SK-N-SH (cell line): ENCODE measurements at regions of chr14 and their contacts with region 1.

Region 1: DNA sequence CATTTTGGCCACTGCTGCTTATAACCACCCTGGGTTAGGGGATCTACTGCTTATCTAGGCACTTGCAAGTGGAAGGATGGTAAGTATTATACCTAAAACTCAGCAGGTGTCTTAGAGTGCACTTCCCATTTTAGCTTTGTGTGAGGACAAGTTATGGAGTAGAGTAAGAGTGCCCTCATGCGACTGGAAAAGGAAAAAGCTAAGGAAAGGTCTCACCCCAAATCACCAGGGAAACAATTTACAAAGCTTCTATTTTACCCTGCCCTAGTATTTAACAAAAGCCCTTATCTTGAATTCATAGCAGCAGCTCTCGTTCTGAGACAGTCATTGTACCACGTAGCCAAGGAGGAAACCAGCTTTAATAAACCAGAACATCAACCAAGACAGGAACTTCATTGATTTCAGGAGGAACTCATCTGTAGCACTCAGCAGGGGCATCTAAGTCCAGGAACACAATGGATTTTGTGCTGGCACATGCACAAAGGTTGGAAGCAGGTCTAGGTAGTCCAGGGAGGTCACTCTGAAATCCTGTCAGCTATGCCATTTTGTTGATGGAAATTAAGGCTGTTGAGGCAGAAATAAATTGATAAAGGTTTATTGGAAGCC is 2.9 kb downstream of the RDH12 start:
- DNase-seq: peak; percentile 59
- H3K4me3 ChIP-seq: no peak overlapping the region
- H3K27ac ChIP-seq: no peak overlapping the region
- H3K4me1 ChIP-seq: no peaks in the 10 kb centered on the region
- H3K27me3 ChIP-seq: no peaks in the 10 kb centered on the region
- CTCF ChIP-seq: peak; percentile 78
- EP300 ChIP-seq: no peak
- RAD21 ChIP-seq: peak; percentile 92

Region 2: DNA sequence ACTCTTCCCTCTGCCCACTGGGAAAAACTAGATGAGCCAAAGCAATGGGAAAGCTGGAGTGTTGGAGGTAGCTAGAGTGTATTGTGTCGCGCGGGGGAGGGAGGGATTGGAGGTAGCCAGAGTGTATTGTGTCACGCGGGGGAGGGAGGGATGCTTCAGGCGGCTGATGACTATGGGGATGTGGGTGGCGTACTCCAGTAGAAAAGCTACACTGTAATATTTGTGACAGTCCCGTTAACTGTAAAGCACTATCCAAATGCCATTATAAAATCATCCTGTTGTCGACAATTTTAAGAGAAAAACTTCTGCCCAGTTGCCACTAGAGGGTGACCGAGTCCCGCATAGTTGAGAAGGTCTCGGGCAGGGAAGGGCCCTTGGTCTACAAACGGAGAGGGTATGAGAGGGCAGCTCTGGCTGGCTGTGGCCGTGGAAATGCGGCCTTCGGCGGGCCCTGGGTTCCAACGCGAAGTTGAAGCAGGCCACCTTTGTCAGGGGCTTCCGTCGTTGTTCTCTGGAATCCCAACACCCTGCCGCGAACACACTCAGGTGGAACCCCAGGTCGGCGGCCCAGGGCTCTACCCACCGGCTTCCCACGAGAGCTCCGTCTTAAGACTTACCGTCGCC is 277.5 kb before region 1 on chr14:
- CTCF ChIA-PET with region 1: interaction called, 44 read pairs
- POLR2A ChIA-PET with region 1: no interaction called
- DNase-seq: peak; percentile 85
- H3K4me3 ChIP-seq: peak overlapping the region in 1 of 2 experiments; percentile 44; a peak in 1 of 4 replicates
- H3K27ac ChIP-seq: no peak overlapping the region
- H3K4me1 ChIP-seq: no peaks in the 10 kb centered on the region
- H3K27me3 ChIP-seq: no peaks in the 10 kb centered on the region; the same call in 1 of the 2 replicates
- CTCF ChIP-seq: peak; percentile 83
- EP300 ChIP-seq: no peak
- RAD21 ChIP-seq: peak; percentile 95

Region 3: GRCh38 chr14:67532998-67533753 is 171.4 kb before region 1 on chr14 and contains the start of gene PLEKHH1:
- CTCF ChIA-PET with region 1: interaction called, 13 read pairs
- POLR2A ChIA-PET with region 1: no interaction called
- DNase-seq: peak; percentile 91
- H3K4me3 ChIP-seq: peak within 1 kb of the TSS; percentile 63 to 70
- H3K27ac ChIP-seq: no peak within 1 kb of the TSS; a peak in 1 of 4 replicates
- H3K4me1 ChIP-seq: no peaks in the 10 kb centered on the region; a peak in 1 of 4 replicates
- H3K27me3 ChIP-seq: peaks cover 6% of the 10 kb centered on the region; the same call in 1 of the 2 replicates
- CTCF ChIP-seq: no peak
- EP300 ChIP-seq: no peak
- RAD21 ChIP-seq: no peak
- polyA plus RNA-seq, gene PLEKHH1: 1.5 and 1.6 TPM in 2 replicates

Region 4: DNA sequence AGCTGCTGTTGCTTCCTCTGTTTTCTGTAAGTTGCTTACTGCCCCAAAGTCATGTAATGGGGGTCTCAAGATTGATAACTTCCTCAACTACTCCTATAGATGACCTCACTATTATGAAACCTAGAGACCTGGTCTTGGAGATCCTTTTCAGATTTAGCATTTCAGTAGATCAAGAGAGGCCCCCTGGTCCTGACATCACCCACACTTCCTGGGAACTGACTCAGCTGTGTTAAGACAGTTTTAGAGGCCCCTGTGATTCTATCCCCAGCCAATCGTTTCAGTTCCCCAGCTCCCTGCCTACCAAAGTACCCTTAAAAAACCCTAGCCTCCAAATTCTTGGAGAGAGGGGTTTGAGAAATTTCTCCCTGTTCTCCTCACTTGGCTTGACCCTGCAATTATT is 94.1 kb before region 1 on chr14:
- CTCF ChIA-PET with region 1: interaction called, 20 read pairs
- POLR2A ChIA-PET with region 1: no interaction called
- DNase-seq: no peak
- H3K4me3 ChIP-seq: no peak overlapping the region
- H3K27ac ChIP-seq: no peak overlapping the region
- H3K4me1 ChIP-seq: no peaks in the 10 kb centered on the region
- H3K27me3 ChIP-seq: no peaks in the 10 kb centered on the region; the same call in 1 of the 2 replicates
- CTCF ChIP-seq: no peak
- EP300 ChIP-seq: no peak
- RAD21 ChIP-seq: no peak

Region 5: DNA sequence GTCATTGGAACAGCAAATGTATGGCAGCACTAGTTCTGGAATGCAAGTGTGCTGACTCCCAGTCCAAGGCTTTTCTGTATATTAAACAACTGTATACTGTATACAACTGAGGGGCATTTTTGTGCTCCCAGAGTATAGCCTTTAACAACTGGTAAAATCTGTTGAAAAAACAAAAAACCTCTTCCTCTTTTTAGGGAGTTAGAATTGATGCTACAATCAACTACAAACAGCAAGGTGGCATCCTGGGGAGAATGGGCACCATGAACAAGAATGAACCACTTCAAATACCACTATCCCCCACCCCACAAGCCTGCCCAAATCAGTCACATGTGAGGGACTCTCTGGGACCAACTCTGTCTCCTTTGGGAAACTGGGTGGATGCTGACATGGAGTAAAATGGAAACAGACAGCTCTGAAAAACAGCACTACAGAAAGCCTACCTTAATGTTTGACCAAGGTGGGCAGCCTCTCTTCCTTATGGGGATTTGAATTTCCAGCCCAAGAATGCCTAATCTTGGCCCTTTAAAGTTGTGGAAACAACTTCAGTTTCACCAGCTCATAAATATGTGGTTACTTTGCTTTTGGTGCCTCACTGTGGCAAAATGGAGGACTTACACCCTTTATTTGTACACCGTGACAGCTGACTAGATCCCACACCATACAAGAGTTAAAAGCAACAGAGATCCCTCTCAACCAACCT is 37.7 kb before region 1 on chr14:
- CTCF ChIA-PET with region 1: interaction called, 15 read pairs
- POLR2A ChIA-PET with region 1: no interaction called
- DNase-seq: peak; percentile 59
- H3K4me3 ChIP-seq: no peak overlapping the region; a peak in 1 of 4 replicates
- H3K27ac ChIP-seq: no peak overlapping the region
- H3K4me1 ChIP-seq: 0 out of 4 replicates have a peak, but pooled peaks cover 0 to 3% of the 10 kb centered on the region in 2 experiments
- H3K27me3 ChIP-seq: no peaks in the 10 kb centered on the region
- CTCF ChIP-seq: peak; percentile 78
- EP300 ChIP-seq: no peak
- RAD21 ChIP-seq: peak; percentile 82

Region 6: DNA sequence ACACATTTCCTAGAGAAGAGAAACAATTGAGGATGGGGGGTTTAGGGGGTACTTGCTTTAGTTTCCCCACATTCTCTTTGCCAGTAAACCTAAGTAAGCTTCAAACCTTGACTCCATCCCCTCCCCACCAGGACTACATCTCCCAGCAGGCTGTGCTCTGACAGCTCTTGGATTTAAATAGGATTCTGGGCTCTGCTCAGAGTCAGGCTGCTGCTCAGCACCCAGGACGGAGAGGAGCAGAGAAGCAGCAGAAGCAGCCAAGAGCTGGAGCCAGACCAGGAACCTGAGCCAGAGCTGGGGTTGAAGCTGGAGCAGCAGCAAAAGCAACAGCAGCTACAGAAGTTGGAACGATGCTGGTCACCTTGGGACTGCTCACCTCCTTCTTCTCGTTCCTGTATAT is 17.7 kb after region 1 on chr14:
- CTCF ChIA-PET with region 1: interaction called, 15 read pairs
- POLR2A ChIA-PET with region 1: no interaction called
- DNase-seq: peak; percentile 58
- H3K4me3 ChIP-seq: peak overlapping the region in 1 of 2 experiments; percentile 2; a peak in 1 of 4 replicates
- H3K27ac ChIP-seq: no peak overlapping the region
- H3K4me1 ChIP-seq: peaks cover 0 to 8% of the 10 kb centered on the region in 2 experiments; a peak in 1 of 4 replicates
- H3K27me3 ChIP-seq: peaks cover 18% of the 10 kb centered on the region
- CTCF ChIP-seq: no peak
- EP300 ChIP-seq: no peak
- RAD21 ChIP-seq: no peak

Region 7: GRCh38 chr14:67856814-67857213 is 152.2 kb after region 1 on chr14:
- CTCF ChIA-PET with region 1: no interaction called
- POLR2A ChIA-PET with region 1: no interaction called
- DNase-seq: no peak
- H3K4me3 ChIP-seq: no peak overlapping the region
- H3K27ac ChIP-seq: no peak overlapping the region
- H3K4me1 ChIP-seq: peaks cover 0 to 5% of the 10 kb centered on the region in 2 experiments; a peak in 1 of 4 replicates
- H3K27me3 ChIP-seq: no peaks in the 10 kb centered on the region
- CTCF ChIP-seq: no peak
- EP300 ChIP-seq: no peak
- RAD21 ChIP-seq: no peak